Vagina (tissue), 2 donors: ENCODE measurements at regions of chr7 and their contacts with region 1.

Region 1: GRCh38 chr7:55887821-55888247 is 578 bp downstream of the ZNF713 start:
- DNase-seq: no peak
- H3K4me3 ChIP-seq: peak overlapping the region; percentile 39 to 60
- H3K27ac ChIP-seq: peak overlapping the region; percentile 36
- H3K4me1 ChIP-seq: peaks cover 7% of the 10 kb centered on the region
- H3K27me3 ChIP-seq: no peaks in the 10 kb centered on the region
- CTCF ChIP-seq: no peak
- POLR2A ChIP-seq: no peak

Region 2: DNA sequence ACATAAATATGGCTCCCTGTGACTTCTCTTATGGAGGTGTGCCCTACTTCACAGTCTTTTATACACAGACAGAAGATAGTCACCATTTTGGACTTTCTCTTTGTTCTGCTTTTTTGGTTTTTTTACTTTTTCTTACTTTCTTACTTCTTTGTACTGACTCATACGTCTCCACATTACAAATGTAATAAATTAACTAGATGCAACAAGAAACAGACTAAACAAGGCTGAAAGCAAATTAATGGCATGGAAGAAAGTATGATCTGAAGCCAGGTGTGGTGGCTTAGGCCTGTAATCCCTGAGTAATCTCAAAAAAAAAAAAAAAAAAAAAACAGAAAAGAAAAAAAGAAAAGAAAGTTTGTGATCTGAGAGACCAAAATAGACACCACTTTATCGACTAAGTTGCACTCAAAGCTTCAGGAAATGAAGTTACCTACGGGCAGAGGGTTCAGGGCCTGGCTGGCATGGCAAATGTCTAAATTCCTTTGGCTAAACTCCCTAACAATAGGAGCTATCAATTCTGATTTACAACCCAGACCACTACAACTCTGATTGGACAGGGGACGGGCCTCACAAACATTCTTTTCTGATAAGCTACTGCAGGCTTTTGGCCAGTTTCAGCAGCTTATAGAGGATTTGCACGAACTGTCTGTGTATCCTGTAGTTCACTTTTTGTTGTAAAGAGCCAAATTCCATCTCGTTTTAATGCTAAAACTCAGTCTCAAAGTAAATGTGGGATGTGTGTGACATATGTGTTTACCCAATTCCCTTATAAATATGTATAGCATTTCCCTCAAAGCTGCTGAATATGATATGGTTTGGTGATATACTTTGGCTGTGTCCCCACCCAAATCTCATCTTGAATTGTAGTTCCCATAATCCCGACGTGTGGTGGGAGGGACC is 154.3 kb before region 1 on chr7:
- intact Hi-C with region 1: no loop called
- DNase-seq: no peak
- H3K4me3 ChIP-seq: no peak overlapping the region
- H3K27ac ChIP-seq: no peak overlapping the region
- H3K4me1 ChIP-seq: no peaks in the 10 kb centered on the region
- H3K27me3 ChIP-seq: no peaks in the 10 kb centered on the region
- CTCF ChIP-seq: no peak
- POLR2A ChIP-seq: no peak

Region 3: GRCh38 chr7:55794527-55794926 is 93.3 kb before region 1 on chr7:
- intact Hi-C with region 1: no loop called
- DNase-seq: no peak
- H3K4me3 ChIP-seq: no peak overlapping the region
- H3K27ac ChIP-seq: no peak overlapping the region
- H3K4me1 ChIP-seq: no peaks in the 10 kb centered on the region
- H3K27me3 ChIP-seq: no peaks in the 10 kb centered on the region
- CTCF ChIP-seq: no peak
- POLR2A ChIP-seq: no peak

Region 4: DNA sequence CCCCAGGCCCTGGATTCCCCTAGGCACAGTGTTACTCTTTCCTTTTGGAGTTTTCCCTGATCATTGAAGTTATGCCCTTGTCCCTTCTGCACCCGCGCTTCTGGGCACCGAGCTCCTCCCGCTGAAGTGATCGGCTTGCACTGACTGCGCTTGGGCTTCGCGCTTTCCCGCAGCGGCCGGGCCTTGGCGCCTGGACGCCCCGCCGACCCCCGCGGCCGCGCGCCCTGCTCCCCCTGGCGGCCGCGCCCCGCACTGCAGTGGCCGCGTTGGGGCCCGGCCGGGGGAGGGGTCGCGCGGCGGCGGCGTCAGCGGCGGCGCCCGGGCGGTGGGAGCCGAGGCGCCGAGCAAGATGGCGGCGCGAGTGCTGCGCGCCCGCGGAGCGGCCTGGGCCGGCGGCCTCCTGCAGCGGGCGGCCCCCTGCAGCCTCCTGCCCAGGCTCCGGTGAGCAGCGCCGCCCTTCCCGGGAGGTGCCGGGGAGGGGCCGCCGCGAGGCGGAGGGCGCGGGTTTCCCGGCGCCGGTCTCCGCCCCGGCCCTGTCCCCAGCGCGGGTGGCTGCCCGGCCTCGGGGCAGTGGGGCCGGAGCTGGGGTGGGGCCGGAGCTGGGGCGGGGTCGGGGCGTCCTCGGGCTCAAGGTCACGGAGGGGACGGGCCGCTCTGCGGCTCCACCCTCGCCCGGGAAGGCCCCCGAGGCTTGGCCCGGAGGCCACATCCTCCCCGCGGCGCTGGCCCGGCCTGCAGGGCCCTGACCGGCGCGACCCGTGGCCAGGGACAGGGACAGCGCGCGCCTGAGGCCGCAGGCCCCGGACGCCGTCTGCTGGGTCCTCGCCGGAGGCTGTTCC is 76.6 kb after region 1 on chr7 and contains the start of gene NIPSNAP2:
- intact Hi-C with region 1: loop called (anchors 5 kb)
- DNase-seq: no peak
- H3K4me3 ChIP-seq: peak within 1 kb of the TSS; percentile 58 to 73
- H3K27ac ChIP-seq: peak within 1 kb of the TSS; percentile 94
- H3K4me1 ChIP-seq: peaks cover 49% of the 10 kb centered on the region
- H3K27me3 ChIP-seq: no peaks in the 10 kb centered on the region
- CTCF ChIP-seq: peak in 1 of 3 experiments; percentile 55
- POLR2A ChIP-seq: no peak
- total RNA-seq, gene NIPSNAP2: 72.2 TPM